Activated T-helper 1 cell treated with anti-CD3 and anti-CD28 coated beads, Interleukin-12 subunit alpha, Interleukin-12 subunit beta, Interleukin-2, Interleukin-4 antibody, amounts not matched to agents 30 ng/mL and 10 ng/mL and 1 ng/mL, durations not matched to agents 14 hours and 24 hours and 36 hours (primary cell): ENCODE measurements at regions of chr14 and their contacts with region 1.

Region 1: DNA sequence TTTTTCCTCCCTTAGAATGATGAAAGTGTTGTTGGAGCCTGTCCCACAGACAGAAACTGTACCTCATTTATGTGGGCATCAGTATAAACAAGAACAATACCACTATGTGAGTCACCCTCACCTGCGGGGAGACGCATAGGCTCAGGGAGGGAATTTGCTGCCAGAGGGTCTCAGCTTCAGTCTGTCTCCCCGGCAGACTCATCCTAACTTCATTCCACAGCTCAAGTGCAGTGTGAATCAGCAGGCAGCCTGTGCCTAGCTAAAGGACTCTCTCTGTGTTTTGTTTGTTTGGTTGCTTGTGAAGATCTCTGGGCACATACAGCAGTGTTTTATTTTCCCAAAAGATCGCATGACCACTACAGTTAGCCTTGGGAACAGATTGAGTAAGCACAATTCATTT is 98.9 kb downstream of the PRKCH start:
- DNase-seq: no peak
- H3K4me3 Mint-ChIP-seq: peak overlapping the region; percentile 54
- H3K27ac Mint-ChIP-seq: peak overlapping the region; percentile 83
- H3K4me1 Mint-ChIP-seq: peaks cover 20% of the 10 kb centered on the region
- H3K27me3 Mint-ChIP-seq: no peaks in the 10 kb centered on the region

Region 2: DNA sequence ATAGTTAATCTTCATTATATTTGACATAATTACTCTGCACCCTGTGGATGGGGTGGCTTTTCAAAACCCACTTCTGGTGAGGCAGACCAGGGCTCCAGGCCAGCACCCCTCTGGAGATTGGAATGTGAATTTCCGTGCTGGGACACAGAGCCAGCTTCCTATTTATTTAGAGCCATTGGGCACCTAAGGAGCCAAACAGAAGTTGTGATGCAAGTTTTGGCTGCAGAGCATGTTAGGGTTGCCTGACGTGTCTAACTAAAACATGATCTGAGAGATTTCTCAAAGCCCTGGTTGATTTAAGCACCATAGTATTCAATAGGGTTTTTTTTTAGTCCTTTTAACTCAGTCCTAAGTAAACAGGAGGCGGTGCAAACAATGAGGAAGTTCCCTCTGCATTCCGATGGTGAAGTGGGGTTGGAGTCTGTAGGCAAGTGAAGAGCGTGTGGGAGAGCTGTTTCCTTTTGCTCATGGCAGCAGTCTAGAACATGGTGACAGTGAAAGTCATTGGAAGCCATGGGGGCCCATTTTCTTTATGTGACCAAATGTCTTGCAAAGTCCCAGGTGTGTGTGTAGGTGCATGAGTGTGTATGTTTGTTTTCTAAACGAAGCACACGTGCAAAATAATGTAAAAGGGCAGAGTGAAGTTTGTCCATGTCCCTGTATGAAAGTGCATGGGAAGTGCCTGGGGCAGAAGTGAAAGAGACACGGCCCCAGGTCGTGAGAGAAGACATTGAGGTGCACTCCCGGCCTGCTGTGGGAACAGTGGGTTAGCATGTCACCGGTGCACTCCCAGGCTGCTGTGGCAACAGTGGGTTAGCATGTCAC is 18.7 kb after region 1 on chr14:
- intact Hi-C with region 1: loop called (anchors 2 kb)
- DNase-seq: no peak
- H3K4me3 Mint-ChIP-seq: peak overlapping the region; percentile 78
- H3K27ac Mint-ChIP-seq: peak overlapping the region; percentile 83
- H3K4me1 Mint-ChIP-seq: peaks cover 80% of the 10 kb centered on the region
- H3K27me3 Mint-ChIP-seq: no peaks in the 10 kb centered on the region

Region 3: DNA sequence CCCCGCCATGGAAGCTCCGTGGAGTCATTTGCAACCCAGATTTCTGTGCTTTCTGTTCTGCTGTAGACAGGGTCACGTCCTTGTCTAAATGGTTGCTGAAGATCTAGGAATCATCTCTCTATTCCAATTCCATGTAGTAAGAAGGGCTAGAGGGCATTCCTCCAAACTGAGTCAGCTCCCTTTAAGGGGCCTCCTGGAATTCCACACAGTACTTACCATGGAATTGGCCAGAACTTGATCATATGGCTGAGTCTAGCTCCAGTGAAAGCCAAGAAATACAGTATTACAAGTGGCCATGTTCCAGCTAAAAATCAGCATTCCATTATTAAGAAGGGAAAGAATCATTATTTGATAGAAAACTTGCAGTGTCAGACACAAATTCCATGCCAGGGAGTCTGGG is 72.9 kb after region 1 on chr14:
- intact Hi-C with region 1: no loop called
- DNase-seq: no peak
- H3K4me3 Mint-ChIP-seq: no peak overlapping the region
- H3K27ac Mint-ChIP-seq: no peak overlapping the region
- H3K4me1 Mint-ChIP-seq: peaks cover 21% of the 10 kb centered on the region
- H3K27me3 Mint-ChIP-seq: no peaks in the 10 kb centered on the region

Region 4: GRCh38 chr14:61628016-61628725 is 207.8 kb after region 1 on chr14:
- intact Hi-C with region 1: no loop called
- DNase-seq: no peak
- H3K4me3 Mint-ChIP-seq: no peak overlapping the region
- H3K27ac Mint-ChIP-seq: no peak overlapping the region
- H3K4me1 Mint-ChIP-seq: peaks cover 21% of the 10 kb centered on the region
- H3K27me3 Mint-ChIP-seq: no peaks in the 10 kb centered on the region